Spleen (tissue), 13 donors: ENCODE measurements at regions of chr6 and their contacts with region 1.

Region 1: DNA sequence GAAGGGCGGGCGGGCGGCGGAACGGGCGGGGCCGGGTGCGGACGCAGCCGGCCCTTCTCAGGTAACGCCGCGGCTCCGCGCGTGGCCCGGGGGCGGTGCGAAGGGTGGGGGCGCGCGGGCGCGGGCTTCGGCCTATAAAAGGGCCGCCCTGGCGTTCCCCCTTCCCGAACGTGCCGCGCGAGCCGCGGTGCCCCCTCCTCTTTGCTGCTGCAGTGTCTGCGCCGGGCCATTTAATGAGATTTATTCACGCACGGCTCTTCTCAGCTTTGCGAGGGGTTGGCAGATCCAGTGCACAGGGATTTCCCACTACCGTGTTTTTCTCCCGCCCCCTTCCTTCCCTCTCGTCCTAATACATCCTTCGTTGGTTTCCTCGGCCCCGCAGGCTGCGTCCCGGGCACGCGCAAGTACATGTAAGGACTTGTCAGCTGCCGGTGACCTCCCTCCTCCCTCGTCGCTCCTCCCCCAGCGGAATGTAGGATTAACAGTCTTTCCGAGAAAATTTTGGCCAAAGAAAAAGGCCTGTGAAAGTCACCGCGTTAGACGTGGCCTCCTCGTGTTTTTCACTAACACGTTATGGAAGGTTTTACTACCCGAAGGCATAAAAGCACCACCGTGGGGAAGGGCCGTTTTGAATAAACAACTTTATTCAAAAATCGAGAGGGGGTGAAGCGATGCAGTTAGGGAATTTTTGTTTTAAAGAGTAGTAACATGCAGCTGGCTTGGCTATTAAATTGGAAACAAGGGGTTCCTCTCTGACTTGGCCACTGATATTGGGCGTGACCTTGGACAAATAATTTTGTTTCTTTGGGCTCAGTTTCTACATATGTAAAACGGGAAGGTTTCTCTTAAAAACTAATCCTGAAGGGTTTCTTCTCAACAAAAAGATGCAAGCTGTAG is 966 bp upstream of the REV3L start:
- DNase-seq: peak; percentile 97
- H3K4me3 ChIP-seq: peak overlapping the region; percentile 76 to 94 (median 90)
- H3K27ac ChIP-seq: peak overlapping the region; percentile 99 to 100 (median 99)
- H3K4me1 ChIP-seq: peaks cover 20 to 73% (median 51%) of the 10 kb centered on the region in 6 donors
- H3K27me3 ChIP-seq: no peaks in the 10 kb centered on the region
- CTCF ChIP-seq: peak in 2 of 11 experiments; percentile 7 to 15
- POLR2A ChIP-seq: peak in 2 of 3 donors; percentile 60 to 87

Region 2: GRCh38 chr6:111259089-111259831 is 224.7 kb before region 1 on chr6:
- intact Hi-C with region 1: loop called (anchors 5 kb)
- DNase-seq: peak; percentile 100
- H3K4me3 ChIP-seq: peak overlapping the region; percentile 64 to 89 (median 75)
- H3K27ac ChIP-seq: peak overlapping the region; percentile 76 to 95 (median 92)
- H3K4me1 ChIP-seq: peaks cover 6 to 47% (median 29%) of the 10 kb centered on the region in 6 donors
- H3K27me3 ChIP-seq: peaks cover 0 to 13% (median 0%) of the 10 kb centered on the region in 7 donors
- CTCF ChIP-seq: peak; percentile 89 to 100 (median 98)
- POLR2A ChIP-seq: peak in 1 of 3 donors; percentile 68

Region 3: DNA sequence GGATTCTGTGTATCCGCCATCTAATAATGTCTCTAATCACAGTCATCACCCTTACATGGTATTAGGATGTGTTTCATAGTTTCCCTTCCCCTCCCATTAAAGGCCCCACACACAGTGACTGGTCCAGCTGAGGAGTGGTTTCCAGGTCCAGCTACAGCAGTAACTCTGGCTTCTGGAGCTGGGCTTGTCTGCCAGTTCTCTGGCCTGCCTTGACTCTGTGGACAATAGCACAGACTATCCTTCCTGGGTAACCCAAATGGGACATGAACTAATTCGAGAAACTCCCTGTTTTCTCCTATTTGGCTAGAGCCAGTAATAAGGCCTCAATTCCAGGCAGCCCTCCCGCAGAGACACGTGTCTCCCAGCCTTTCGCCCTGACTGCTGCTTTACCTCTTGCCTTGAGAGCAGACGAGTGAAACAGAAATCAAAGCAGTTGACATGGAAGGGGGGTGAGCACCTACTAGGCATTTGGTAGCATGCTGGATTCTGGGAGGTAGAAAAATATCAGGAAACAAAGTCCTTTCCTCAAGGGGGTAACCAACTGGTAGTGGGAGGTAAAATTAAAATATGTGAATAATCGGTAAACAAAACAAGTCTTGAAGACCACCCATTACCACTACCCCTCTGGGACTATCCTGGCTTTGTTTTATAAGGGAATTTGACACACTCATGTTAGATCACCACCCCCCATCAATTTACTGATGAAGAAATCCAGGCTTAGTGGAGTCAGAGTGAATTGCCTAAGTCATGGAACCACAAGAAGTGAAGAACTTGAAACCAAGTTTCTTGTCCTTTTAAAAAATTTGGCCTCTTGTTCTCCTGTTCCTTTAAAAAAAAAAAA is 120.5 kb after region 1 on chr6:
- intact Hi-C with region 1: loop called (anchors 5 kb)
- DNase-seq: no peak
- H3K4me3 ChIP-seq: peak overlapping the region; percentile 49 to 72 (median 52)
- H3K27ac ChIP-seq: peak overlapping the region; percentile 78 to 90 (median 88)
- H3K4me1 ChIP-seq: peaks cover 20 to 65% (median 48%) of the 10 kb centered on the region in 6 donors
- H3K27me3 ChIP-seq: no peaks in the 10 kb centered on the region
- CTCF ChIP-seq: no peak
- POLR2A ChIP-seq: no peak